ENCODE measurements at regions of chr19 and their contacts with region 1.

Region 1: DNA sequence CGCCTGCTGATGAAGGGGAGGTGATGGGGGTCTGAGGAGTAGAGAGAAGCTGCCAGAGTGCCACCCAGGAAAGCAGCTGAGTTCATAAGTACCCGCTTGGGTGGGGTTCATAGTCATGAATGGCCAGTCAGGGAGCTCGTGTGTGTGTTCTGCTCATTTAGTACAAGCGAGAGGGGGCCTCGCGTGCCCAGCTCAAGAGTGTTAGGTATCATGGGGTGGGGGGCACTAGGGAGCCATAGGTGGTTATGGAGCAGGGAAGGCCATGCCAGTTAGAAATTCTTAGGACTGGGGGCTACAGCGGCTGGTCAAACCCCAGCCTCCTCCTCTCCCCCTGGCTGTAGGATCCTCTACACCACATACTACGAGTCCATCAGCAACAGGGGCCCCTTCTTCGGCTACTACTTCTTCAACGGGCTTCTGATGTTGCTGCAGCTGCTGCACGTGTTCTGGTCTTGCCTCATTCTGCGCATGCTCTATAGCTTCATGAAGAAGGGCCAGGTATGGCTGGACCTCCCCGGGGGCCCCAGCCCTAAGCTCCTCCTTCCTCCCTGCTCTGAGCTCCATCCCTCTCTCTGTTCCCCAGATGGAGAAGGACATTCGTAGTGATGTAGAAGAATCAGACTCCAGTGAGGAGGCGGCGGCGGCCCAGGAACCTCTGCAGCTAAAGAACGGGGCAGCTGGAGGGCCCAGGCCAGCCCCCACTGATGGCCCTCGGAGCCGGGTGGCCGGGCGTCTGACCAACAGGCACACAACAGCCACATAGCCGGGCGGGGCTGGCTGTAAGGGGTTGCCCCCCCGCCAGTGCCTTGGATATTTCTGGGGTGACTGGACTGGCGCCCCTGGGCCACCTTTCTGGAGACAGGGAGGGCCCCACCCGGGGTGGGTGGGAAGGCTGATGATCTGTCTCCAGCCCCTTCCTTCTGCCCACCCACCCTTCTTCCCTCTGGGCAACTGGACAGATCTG is 46.5 kb downstream of the CD320 start:
- DNase-seq: peak in 1 of 2 experiments; percentile 26
- H3K4me3 ChIP-seq: no peak overlapping the region
- H3K27ac ChIP-seq: no peak overlapping the region
- H3K4me1 ChIP-seq: no peaks in the 10 kb centered on the region
- H3K27me3 ChIP-seq: no peaks in the 10 kb centered on the region
- CTCF ChIP-seq: no peak

Region 2: DNA sequence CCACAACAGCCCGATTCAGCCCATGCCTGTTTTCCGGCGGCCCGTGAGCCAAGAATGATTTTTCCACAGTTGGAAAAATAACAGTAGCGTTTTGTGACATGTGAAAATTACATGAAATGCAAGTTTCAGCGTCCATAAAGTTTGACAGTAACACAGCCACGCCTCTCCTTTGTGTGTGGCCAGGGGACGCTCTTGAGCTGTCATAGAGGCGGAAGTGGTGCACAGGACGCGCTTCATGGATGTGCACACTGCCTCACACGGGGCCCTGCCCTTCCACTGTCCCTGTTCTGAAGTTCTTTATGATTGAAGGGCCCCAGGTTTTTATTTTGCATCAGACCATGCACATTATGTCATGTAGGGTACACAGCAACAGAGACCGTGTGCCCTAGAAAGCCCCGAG is 243.8 kb before region 1 on chr19:
- CTCF ChIA-PET with region 1: no interaction called
- POLR2A ChIA-PET with region 1: interaction called, 25 read pairs
- intact Hi-C with region 1: no loop called
- DNase-seq: no peak
- H3K4me3 ChIP-seq: no peak overlapping the region
- H3K27ac ChIP-seq: no peak overlapping the region
- H3K4me1 ChIP-seq: no peaks in the 10 kb centered on the region
- H3K27me3 ChIP-seq: no peaks in the 10 kb centered on the region
- CTCF ChIP-seq: no peak

Region 3: DNA sequence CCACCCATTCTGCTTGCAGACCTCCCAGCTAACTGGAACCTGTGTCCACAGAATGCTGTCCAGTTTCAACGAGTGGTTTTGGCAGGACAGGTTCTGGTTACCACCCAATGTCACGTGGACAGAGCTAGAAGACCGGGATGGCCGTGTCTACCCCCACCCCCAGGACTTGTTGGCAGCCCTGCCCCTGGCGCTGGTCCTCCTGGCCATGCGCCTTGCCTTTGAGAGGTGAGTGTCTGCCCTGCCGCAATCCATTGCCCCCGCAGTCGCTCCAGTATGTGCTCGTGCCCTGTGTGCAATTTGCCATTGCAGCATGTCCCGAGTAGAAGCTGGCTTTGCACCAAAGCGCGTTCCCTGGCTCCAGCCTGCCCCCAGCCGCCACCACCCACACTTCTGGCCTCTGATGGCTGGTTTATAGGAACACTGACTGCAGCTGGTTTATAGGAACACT is 10.6 kb before region 1 on chr19:
- CTCF ChIA-PET with region 1: no interaction called
- POLR2A ChIA-PET with region 1: no interaction called
- intact Hi-C with region 1: no loop called
- DNase-seq: no peak
- H3K4me3 ChIP-seq: no peak overlapping the region
- H3K27ac ChIP-seq: no peak overlapping the region
- H3K4me1 ChIP-seq: no peaks in the 10 kb centered on the region
- H3K27me3 ChIP-seq: no peaks in the 10 kb centered on the region
- CTCF ChIP-seq: no peak

Measured in PC-9 (cell line).